Left cardiac atrium (tissue), 4 donors: ENCODE measurements at regions of chr5 and their contacts with region 1.

Region 1: DNA sequence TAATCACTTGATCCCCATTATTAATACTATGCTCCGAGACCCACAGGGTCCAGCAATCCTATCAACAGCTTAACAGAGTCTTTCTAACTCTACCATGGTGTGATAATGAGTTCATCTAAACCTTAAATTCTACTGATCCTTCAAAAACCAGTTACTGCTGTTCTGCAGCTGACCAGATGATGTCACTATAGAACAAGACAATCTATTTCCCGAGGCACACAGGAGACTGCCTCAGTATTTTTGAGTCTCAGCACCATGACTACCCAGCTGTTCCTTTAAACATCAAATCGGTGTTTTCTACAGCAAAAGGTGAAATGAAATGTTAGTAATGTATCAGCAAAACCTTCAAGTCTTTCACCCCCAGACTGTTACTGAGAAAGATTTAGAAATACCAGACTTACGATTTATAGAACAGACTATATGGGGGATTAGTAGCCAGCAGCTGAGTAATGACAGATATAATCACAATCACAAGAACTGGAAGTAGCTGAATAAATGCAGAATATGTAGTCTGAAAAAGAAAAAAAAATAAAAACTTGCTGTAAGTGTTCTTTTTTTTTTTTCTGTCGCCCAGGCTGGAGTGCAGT is 16.9 kb downstream of the DNAJC18 start:
- DNase-seq: no peak
- ATAC-seq: peak; percentile 43 to 58

Region 2: GRCh38 chr5:139482050-139482889 is 59.9 kb after region 1 on chr5 and contains the start of gene STING1:
- intact Hi-C with region 1: loop called in 1 of 2 experiments (anchors 2 kb)
- DNase-seq: peak; percentile 91
- ATAC-seq: peak; percentile 77 to 80
- total RNA-seq, gene STING1: 84.4 to 92.0 TPM

Region 3: DNA sequence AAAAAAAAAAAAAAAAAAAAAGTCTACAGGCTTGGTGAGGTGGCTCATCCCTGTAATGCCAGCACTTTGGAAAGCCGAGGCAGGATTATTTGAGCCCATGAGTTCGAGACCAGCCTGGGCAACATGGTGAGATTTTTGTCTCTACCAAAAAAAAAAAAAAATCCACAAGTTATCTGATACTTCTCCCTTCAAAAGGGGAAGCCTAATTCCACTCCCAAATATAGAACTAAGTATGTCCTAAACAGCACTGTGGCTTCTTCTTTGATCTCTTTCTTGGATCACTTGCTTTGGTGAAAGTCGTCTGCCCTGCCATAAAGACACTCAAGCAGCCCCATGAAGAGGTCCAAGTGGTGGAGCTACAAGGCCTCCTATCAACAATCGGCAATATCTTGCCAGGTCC is 79.0 kb after region 1 on chr5:
- intact Hi-C with region 1: no loop called
- DNase-seq: no peak
- ATAC-seq: no peak

Region 4: GRCh38 chr5:139517683-139518564 is 95.5 kb after region 1 on chr5:
- intact Hi-C with region 1: loop called (anchors 2 to 5 kb)
- DNase-seq: peak; percentile 94
- ATAC-seq: peak; percentile 93 to 96

Region 5: DNA sequence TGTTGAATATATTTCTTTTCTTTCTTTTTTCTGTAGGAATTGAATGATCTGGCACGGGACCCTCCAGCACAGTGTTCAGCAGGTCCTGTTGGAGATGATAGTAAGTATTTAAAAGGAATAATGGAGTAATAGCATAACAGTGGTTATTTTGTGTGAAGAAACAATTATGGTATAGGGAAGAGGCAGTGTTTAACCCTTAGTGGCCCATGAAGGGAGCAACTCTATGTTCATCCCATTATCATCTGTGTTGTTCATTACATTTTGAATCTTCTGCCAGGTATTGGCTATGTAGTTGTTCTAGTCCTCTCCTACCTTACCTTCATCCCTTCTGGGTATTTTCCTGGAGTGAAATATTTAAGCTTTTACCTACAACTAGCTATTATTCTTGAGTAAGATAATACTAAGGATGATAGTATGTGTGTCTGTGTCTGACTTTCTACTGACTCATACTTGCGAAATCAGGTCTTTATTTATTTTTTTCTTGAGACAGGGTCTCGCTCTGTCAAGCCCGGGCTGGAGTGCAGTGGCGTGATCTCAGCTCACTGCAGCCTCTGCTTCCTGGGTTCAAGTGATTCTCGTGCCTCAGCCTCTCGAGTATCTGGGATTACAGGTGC is 178.0 kb after region 1 on chr5:
- intact Hi-C with region 1: loop called in 1 of 2 experiments (anchors 10 kb)
- DNase-seq: no peak
- ATAC-seq: no peak

Region 6: GRCh38 chr5:139689631-139690063 is 267.2 kb after region 1 on chr5:
- intact Hi-C with region 1: no loop called
- DNase-seq: no peak
- ATAC-seq: peak; percentile 6 to 13

Region 7: GRCh38 chr5:139774980-139775661 is 352.7 kb after region 1 on chr5:
- intact Hi-C with region 1: loop called in 1 of 2 experiments (anchors 10 kb)
- DNase-seq: peak; percentile 76
- ATAC-seq: peak; percentile 90 to 91